CD4-positive, alpha-beta memory T cell (primary cell): ENCODE measurements at regions of chr15 and their contacts with region 1.

Region 1: DNA sequence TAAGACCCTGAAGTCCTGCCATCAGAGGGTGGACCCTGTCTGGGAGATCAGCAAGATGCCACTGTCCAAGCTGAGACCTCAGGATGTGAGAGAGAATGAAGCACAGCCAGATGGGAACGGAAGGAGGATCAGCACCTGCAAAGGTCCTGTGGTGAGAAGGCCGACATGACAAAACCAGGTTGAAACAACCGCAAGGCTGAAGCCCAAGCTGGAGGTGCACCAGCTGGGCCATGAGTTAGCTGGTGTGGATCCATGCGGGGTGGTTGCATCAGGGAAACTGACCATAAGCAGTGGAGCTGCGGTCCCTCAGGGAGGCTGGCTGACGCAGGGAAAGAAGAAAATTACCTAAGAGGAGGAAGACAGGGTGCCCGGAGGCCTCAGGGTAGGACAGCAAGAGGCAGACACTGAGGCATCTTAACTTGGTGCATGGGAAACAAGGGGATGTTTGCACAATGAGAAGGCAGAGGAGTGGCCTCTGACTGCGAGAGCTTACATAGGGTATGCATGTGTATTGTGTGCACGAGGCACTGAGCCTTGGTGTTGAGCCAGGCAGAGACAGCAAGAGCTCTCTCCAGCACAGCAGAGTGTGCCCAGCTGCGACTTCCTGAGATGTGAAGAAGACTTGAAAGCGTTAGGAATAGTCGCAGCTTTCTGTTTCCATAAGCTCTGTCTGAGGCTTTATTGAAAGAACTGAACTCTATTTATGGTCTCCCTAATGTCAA is 497.7 kb downstream of the OCA2 start:
- DNase-seq: no peak
- H3K4me3 ChIP-seq: no peak overlapping the region
- H3K4me3 Mint-ChIP-seq: no peak overlapping the region
- H3K27ac ChIP-seq: no peak overlapping the region
- H3K27ac Mint-ChIP-seq: no peak overlapping the region
- H3K4me1 ChIP-seq: no peaks in the 10 kb centered on the region
- H3K4me1 Mint-ChIP-seq: no peaks in the 10 kb centered on the region
- H3K27me3 ChIP-seq: no peaks in the 10 kb centered on the region
- H3K27me3 Mint-ChIP-seq: no peaks in the 10 kb centered on the region

Region 2: DNA sequence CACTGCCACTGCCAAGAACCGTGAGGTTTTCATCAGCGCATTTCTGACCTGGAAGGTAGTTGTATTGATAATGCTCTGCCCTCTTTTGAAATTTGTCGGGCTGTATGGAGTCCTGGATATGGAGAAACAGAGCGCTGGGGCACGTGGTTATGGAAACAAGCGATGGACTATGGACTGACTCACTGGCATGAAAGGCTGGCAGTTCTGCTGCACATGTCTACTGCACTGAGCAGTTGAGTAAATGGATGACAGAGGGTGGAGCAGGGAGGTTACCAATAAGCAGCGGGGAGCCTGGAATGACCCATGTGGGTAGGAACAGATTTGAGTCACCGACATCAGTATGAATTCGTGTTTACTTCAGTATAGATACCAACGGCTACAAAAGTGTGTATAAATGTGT is 68.2 kb after region 1 on chr15:
- CTCF ChIA-PET with region 1: no interaction called
- POLR2A ChIA-PET with region 1: no interaction called
- intact Hi-C with region 1: loop called (anchors 10 kb)
- DNase-seq: no peak
- H3K4me3 ChIP-seq: no peak overlapping the region
- H3K4me3 Mint-ChIP-seq: no peak overlapping the region
- H3K27ac ChIP-seq: no peak overlapping the region
- H3K27ac Mint-ChIP-seq: no peak overlapping the region
- H3K4me1 ChIP-seq: no peaks in the 10 kb centered on the region
- H3K4me1 Mint-ChIP-seq: no peaks in the 10 kb centered on the region
- H3K27me3 ChIP-seq: no peaks in the 10 kb centered on the region
- H3K27me3 Mint-ChIP-seq: no peaks in the 10 kb centered on the region

Region 3: DNA sequence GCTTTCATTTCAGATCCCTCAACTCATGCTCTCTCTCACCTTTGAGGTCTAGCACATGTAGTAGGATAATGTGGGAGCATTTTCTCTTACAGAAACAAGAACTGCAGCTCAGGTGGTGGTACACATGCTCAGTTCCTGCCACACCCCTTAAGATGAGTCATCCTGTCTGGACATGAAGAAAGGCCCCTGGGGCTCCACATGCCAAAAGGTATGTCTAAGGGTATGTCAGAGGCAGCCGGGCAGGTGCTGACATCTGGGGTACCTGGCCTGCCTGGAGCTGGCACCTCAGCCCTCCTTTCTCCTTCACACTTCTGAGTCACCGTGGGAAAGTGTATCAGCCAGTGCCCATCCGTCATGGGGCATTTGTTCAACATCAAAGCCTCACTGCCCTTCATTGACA is 287.9 kb after region 1 on chr15:
- CTCF ChIA-PET with region 1: no interaction called
- POLR2A ChIA-PET with region 1: no interaction called
- intact Hi-C with region 1: no loop called
- DNase-seq: no peak
- H3K4me3 ChIP-seq: no peak overlapping the region
- H3K4me3 Mint-ChIP-seq: no peak overlapping the region
- H3K27ac ChIP-seq: no peak overlapping the region
- H3K27ac Mint-ChIP-seq: no peak overlapping the region
- H3K4me1 ChIP-seq: no peaks in the 10 kb centered on the region
- H3K4me1 Mint-ChIP-seq: no peaks in the 10 kb centered on the region
- H3K27me3 ChIP-seq: no peaks in the 10 kb centered on the region
- H3K27me3 Mint-ChIP-seq: peaks cover 0 to 1% of the 10 kb centered on the region in 2 donors